Activated CD4-positive, alpha-beta T cell treated with anti-CD3 and anti-CD28 coated beads, Interleukin-2, amount 10 ng/mL, durations not matched to agents 7 days and 5 days (primary cell): ENCODE measurements at regions of chr16 and their contacts with region 1.

Region 1: GRCh38 chr16:80580109-80580832 is 39.5 kb downstream of the DYNLRB2 start:
- DNase-seq: peak; percentile 87
- H3K4me3 Mint-ChIP-seq: peak overlapping the region; percentile 73
- H3K27ac Mint-ChIP-seq: peak overlapping the region; percentile 98
- H3K4me1 Mint-ChIP-seq: peaks cover 63% of the 10 kb centered on the region
- H3K27me3 Mint-ChIP-seq: no peaks in the 10 kb centered on the region

Region 2: GRCh38 chr16:80591071-80591915 is 11.0 kb after region 1 on chr16:
- CTCF ChIA-PET with region 1: interaction called, 11 read pairs
- POLR2A ChIA-PET with region 1: interaction called, 11 read pairs
- DNase-seq: peak; percentile 72
- H3K4me3 Mint-ChIP-seq: peak overlapping the region; percentile 3
- H3K27ac Mint-ChIP-seq: peak overlapping the region; percentile 82
- H3K4me1 Mint-ChIP-seq: peaks cover 41% of the 10 kb centered on the region
- H3K27me3 Mint-ChIP-seq: peaks cover 21% of the 10 kb centered on the region